ENCODE measurements at regions of chr10 and their contacts with region 1.

Region 1: GRCh38 chr10:12839941-12840611 is 161.4 kb downstream of the CCDC3 start:
- DNase-seq: no peak
- ATAC-seq: no peak
- H3K4me3 ChIP-seq: no peak overlapping the region
- H3K27ac ChIP-seq: no peak overlapping the region
- H3K4me1 ChIP-seq: no peaks in the 10 kb centered on the region
- H3K27me3 ChIP-seq: no peaks in the 10 kb centered on the region
- CTCF ChIP-seq: no peak

Region 2: DNA sequence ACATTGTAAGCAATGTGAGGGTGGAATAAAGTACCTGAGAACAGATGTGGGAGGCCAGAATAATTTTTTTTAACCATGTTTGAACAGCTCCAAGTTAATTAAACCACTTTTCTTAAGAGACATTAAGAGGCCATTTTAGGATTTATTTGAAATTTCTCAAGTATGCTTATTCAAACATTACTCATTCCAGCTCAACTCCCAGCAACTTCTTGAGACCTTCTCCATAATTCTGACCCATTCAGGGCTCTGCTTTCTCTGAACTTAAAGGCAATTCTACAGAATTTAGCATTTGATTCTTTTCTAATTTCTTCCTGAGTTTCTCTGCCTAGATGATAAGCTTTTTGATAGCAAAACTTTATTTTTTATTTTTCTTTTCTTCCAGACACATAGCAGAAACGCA is 176.2 kb before region 1 on chr10:
- CTCF ChIA-PET with region 1: no interaction called
- POLR2A ChIA-PET with region 1: no interaction called
- in situ Hi-C with region 1: no loop called
- intact Hi-C with region 1: no loop called
- DNase-seq: no peak
- ATAC-seq: no peak
- H3K4me3 ChIP-seq: no peak overlapping the region
- H3K27ac ChIP-seq: no peak overlapping the region
- H3K4me1 ChIP-seq: no peaks in the 10 kb centered on the region
- H3K27me3 ChIP-seq: no peaks in the 10 kb centered on the region
- CTCF ChIP-seq: no peak

Region 3: GRCh38 chr10:12819071-12819470 is 21.0 kb before region 1 on chr10:
- CTCF ChIA-PET with region 1: no interaction called
- POLR2A ChIA-PET with region 1: no interaction called
- in situ Hi-C with region 1: no loop called
- intact Hi-C with region 1: no loop called
- DNase-seq: no peak
- ATAC-seq: no peak
- H3K4me3 ChIP-seq: no peak overlapping the region
- H3K27ac ChIP-seq: no peak overlapping the region
- H3K4me1 ChIP-seq: no peaks in the 10 kb centered on the region
- H3K27me3 ChIP-seq: no peaks in the 10 kb centered on the region
- CTCF ChIP-seq: no peak

Region 4: GRCh38 chr10:12852687-12853086 is 12.6 kb after region 1 on chr10:
- CTCF ChIA-PET with region 1: no interaction called
- POLR2A ChIA-PET with region 1: no interaction called
- in situ Hi-C with region 1: no loop called
- intact Hi-C with region 1: no loop called
- DNase-seq: no peak
- ATAC-seq: no peak
- H3K4me3 ChIP-seq: no peak overlapping the region
- H3K27ac ChIP-seq: no peak overlapping the region
- H3K4me1 ChIP-seq: no peaks in the 10 kb centered on the region
- H3K27me3 ChIP-seq: no peaks in the 10 kb centered on the region
- CTCF ChIP-seq: no peak

Region 5: DNA sequence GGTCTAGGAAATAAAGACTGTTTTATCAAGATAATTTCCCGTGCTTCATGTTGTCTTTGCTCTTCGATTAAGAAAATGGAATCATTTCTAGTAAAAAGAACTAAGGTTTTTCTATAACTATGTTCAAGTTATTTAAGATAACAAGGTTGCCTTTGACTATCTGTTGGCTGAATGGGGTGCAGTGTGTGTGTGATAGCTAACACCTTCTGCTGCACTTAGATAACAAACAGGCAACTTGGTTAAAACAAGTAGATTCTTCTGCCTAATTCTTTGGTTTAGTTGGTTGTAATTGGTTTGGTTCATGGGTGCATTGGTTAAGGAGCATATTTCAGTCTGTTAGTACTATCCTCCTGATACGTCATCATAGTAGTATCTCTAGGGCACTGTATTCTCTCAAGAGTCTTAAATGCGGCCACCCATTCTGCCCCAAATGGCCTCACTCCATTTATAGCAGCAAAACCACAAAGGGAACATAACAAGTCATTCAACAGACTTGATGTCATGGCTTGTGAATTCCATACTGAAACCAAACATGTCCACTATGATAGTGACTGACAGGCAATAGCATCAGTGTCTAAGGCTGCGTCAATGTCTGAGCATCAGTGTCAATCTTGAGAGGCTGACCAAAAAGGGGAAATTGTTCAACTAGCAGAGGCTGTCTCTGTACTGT is 105.7 kb after region 1 on chr10:
- CTCF ChIA-PET with region 1: no interaction called
- POLR2A ChIA-PET with region 1: no interaction called
- in situ Hi-C with region 1: no loop called
- intact Hi-C with region 1: no loop called
- DNase-seq: no peak
- ATAC-seq: no peak
- H3K4me3 ChIP-seq: no peak overlapping the region
- H3K27ac ChIP-seq: no peak overlapping the region
- H3K4me1 ChIP-seq: no peaks in the 10 kb centered on the region
- H3K27me3 ChIP-seq: no peaks in the 10 kb centered on the region; the same call in none of the 2 replicates
- CTCF ChIP-seq: no peak

Region 6: GRCh38 chr10:13816195-13816926 is 976.3 kb after region 1 on chr10:
- CTCF ChIA-PET with region 1: no interaction called
- POLR2A ChIA-PET with region 1: interaction called, 11 read pairs
- in situ Hi-C with region 1: no loop called
- intact Hi-C with region 1: no loop called
- DNase-seq: no peak
- ATAC-seq: no peak
- H3K4me3 ChIP-seq: no peak overlapping the region
- H3K27ac ChIP-seq: no peak overlapping the region
- H3K4me1 ChIP-seq: no peaks in the 10 kb centered on the region
- H3K27me3 ChIP-seq: no peaks in the 10 kb centered on the region
- CTCF ChIP-seq: no peak